ENCODE measurements at regions of chr20 and their contacts with region 1.

Region 1: DNA sequence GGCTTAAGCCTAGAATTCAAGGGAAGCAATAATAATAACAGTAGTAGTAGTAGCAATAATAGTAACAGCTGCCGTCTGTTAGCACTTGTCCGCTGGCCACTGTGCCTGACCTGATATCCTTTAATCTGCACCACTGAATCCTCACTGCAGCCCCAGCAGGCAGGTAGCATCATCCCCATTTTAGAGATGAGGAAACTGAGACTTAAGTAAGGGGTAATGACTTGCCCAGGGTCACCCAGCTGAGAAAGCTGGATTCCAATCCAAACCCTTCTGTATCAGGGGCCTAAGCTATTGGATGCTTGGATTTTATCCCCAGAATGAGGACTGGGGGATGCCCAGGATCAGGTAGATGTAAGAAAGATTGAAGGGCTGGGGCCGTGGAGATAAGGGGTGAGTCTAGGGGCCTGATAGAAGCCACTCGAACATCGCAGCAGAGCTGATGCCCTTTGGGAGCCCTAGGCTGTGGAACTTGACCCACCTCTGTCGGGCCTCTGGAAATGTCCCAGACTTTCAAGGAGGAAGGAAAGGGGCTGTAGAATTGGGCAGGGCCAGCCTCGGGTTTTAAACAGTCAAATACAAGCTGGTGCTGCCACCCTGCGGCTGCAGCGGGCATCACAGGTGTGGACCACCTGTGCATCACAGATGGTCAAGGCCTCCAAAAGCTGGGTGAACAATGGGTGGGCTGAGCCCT is 102.1 kb upstream of the MYL9 start:
- DNase-seq: peak; percentile 88 to 94
- H3K4me3 ChIP-seq: no peak overlapping the region
- H3K4me3 Mint-ChIP-seq: no peak overlapping the region
- H3K27ac Mint-ChIP-seq: no peak overlapping the region
- H3K4me1 ChIP-seq: peaks cover 3% of the 10 kb centered on the region; the same call in 1 of the 2 replicates
- H3K4me1 Mint-ChIP-seq: peaks cover 11% of the 10 kb centered on the region
- H3K27me3 ChIP-seq: no peaks in the 10 kb centered on the region
- H3K27me3 Mint-ChIP-seq: no peaks in the 10 kb centered on the region
- CTCF ChIP-seq: peak; percentile 99 to 100

Region 2: DNA sequence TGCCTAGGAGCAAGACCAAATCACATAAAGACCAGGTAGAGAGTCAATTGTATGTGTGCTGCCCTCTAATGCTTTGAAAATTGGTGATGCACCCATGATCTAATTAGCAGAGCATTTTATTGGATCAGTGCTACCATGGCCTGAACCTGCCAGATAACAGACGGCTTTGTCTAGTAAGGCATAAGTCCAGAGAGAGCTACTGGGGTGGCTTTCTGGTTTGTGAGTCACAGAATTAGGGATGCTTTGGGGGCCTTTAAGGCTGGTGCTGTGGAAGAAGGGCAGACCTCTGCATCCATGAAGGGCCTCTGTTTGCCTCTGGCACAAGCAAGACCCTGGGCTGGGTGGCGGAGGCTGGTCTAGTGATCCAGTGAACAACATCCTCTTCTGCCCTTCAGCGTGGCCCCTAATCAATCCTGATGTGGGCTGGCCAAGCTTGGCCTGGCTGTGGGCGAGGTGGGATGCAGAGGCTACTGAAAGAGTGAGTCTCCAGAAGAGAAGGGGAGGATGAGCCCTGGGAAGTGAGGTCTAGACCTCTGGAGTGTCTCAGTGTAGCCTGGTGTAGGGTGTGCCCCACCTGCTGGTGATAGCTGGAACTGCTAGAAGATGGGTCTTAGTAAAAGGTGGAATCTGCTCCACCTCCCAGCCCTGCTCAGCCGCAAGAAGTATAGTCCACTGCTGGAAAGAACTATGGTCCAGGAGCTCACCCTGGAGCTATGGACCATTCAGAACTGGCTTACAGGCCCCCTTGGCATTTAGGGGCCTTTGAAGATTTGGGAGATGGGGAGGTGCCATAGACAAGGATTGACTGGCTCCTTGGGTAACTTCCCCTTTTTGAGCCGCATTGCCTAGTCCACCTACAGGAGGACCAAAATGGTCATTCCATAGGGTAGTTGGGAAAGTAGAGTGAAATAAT is 239.6 kb before region 1 on chr20:
- CTCF ChIA-PET with region 1: interaction called, 38 read pairs
- POLR2A ChIA-PET with region 1: no interaction called
- intact Hi-C with region 1: loop called (anchors 1 kb)
- DNase-seq: peak; percentile 90 to 93
- H3K4me3 ChIP-seq: no peak overlapping the region
- H3K4me3 Mint-ChIP-seq: no peak overlapping the region
- H3K27ac Mint-ChIP-seq: no peak overlapping the region
- H3K4me1 ChIP-seq: no peaks in the 10 kb centered on the region
- H3K4me1 Mint-ChIP-seq: no peaks in the 10 kb centered on the region
- H3K27me3 ChIP-seq: no peaks in the 10 kb centered on the region
- H3K27me3 Mint-ChIP-seq: no peaks in the 10 kb centered on the region
- CTCF ChIP-seq: peak; percentile 99 to 100

Region 3: DNA sequence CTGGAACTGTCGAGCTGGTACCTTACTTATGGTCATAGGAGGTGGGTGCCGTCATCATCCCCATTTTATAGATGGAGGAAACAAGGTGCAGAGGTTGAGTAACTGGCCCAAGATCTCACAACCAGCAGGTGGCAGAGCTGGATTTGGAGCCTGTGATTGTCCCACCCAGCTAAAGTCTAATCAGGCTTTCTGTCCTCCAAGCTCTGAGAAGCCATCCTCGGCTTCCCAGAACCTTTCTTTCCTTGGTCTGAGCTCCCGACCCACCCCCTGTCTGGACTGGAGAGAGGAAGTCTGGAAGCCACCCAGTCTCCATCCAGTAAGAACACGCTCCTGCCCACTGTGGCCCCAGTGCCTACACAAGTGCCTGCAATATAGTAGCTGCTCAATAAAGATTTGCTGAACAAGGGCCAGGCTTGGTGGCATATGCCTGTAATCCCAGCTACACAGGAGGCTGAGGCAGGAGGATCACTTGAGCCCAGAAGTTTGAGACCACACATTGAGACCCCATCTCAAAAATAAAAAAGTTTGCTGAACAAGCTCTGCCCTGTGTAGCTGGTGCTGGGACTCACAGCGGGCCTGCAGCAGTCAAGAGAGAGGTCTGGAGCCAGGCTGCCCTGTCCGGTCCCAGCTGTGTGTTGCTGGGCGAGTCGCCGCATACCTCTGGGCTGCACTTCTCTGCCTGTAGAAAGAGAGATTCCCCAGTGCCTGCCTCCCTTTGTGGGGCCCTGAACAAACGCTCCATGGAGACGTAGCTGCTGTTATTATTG is 165.6 kb before region 1 on chr20:
- CTCF ChIA-PET with region 1: interaction called, 59 read pairs
- POLR2A ChIA-PET with region 1: no interaction called
- intact Hi-C with region 1: loop called (anchors 1 kb)
- DNase-seq: peak; percentile 56 to 58
- H3K4me3 ChIP-seq: no peak overlapping the region
- H3K4me3 Mint-ChIP-seq: no peak overlapping the region
- H3K27ac Mint-ChIP-seq: no peak overlapping the region
- H3K4me1 ChIP-seq: no peaks in the 10 kb centered on the region
- H3K4me1 Mint-ChIP-seq: no peaks in the 10 kb centered on the region
- H3K27me3 ChIP-seq: no peaks in the 10 kb centered on the region; the same call in 1 of the 2 replicates
- H3K27me3 Mint-ChIP-seq: peaks cover 14% of the 10 kb centered on the region
- CTCF ChIP-seq: peak; percentile 57 to 70

Region 4: GRCh38 chr20:36368869-36369268 is 70.3 kb before region 1 on chr20:
- CTCF ChIA-PET with region 1: no interaction called
- POLR2A ChIA-PET with region 1: no interaction called
- intact Hi-C with region 1: no loop called
- DNase-seq: no peak
- H3K4me3 ChIP-seq: no peak overlapping the region
- H3K4me3 Mint-ChIP-seq: no peak overlapping the region
- H3K27ac Mint-ChIP-seq: no peak overlapping the region
- H3K4me1 ChIP-seq: peaks cover 8% of the 10 kb centered on the region
- H3K4me1 Mint-ChIP-seq: peaks cover 7% of the 10 kb centered on the region
- H3K27me3 ChIP-seq: no peaks in the 10 kb centered on the region; the same call in none of the 2 replicates
- H3K27me3 Mint-ChIP-seq: peaks cover 13% of the 10 kb centered on the region
- CTCF ChIP-seq: no peak

Region 5: DNA sequence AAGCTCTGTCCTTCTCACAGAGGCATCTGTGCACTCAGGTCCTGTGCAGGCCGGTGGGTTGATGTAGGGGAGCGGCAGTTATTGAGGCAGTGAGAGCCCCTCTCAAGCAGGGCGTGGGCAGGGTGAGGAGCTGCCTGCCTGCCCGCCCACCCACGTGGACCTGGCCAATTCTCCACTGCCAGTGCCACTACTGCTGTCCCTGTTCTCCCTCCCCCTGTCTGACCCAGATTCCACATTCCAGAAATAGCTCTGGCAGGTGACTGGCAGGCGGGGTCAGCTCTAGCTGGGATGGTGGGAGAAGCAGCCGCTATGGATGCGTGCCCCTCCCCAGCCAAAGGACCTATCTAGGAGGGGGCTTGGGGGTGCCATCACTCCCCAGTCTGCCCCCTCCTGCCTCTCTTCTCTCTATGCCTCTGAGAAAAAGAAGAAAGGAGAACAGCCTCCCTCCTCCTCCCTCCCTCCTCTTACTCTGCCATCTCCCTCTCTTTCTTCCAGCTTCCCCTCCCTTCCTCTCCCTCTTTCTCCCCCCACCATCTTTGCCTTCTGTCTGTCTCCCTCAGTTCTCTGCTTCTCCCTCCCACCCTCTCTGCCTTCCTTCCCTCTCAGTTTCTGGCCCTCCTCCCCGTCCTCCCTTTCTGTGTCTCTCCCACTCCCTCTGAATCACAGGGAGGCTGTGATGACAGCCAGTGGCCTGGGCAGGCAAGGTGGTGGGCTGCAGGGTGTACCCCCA is 15.7 kb after region 1 on chr20:
- CTCF ChIA-PET with region 1: interaction called, 10 read pairs
- POLR2A ChIA-PET with region 1: interaction called, 3 read pairs
- intact Hi-C with region 1: loop called (anchors 2 kb)
- DNase-seq: peak; percentile 88 to 90
- H3K4me3 ChIP-seq: no peak overlapping the region
- H3K4me3 Mint-ChIP-seq: peak overlapping the region; percentile 55
- H3K27ac Mint-ChIP-seq: peak overlapping the region; percentile 70
- H3K4me1 ChIP-seq: peaks cover 22% of the 10 kb centered on the region
- H3K4me1 Mint-ChIP-seq: peaks cover 24% of the 10 kb centered on the region
- H3K27me3 ChIP-seq: no peaks in the 10 kb centered on the region
- H3K27me3 Mint-ChIP-seq: no peaks in the 10 kb centered on the region
- CTCF ChIP-seq: no peak